ENCODE measurements at regions of chr1 and their contacts with region 1.

Region 1: DNA sequence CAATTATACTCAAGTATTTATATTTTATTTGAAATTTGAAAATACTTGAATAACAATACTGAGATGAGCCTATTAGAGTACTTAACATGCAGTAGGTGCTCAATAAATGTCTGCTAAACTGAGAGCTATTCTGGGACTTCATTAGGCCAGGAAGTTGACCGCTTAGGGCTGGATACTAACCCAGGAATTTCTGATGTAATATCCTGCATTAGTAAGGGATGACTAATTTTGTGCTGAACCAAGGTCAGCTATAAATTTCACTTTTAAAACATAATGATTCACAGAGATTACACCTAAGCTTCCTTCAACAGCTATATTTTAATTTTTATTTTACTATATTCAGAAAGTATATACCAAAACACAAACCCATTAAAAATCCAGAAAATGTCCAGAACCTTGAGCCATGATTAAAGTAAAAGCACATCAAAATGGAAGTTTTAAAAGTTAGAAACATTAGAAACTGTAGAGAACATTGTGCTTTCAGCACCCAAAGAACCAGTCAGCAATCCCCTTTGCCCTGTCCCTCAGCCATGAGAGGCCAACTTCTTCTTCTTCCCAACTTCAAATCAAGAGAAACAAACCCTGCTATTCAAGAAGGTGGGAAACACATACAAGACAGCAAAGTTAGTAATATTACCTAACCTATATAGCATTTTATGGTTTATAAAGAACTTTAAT is 35.4 kb downstream of the WNT2B start:
- DNase-seq: peak; percentile 95
- ATAC-seq: peak; percentile 82
- H3K4me3 ChIP-seq: no peak overlapping the region
- H3K27ac ChIP-seq: peak overlapping the region; percentile 81
- H3K4me1 ChIP-seq: peaks cover 5% of the 10 kb centered on the region; the same call in 1 of the 2 replicates
- H3K27me3 ChIP-seq: no peaks in the 10 kb centered on the region
- CTCF ChIP-seq: no peak
- POLR2A ChIP-seq: no peak
- RAD21 ChIP-seq: no peak

Region 2: GRCh38 chr1:112575154-112575804 is 31.1 kb after region 1 on chr1:
- CTCF ChIA-PET with region 1: no interaction called
- POLR2A ChIA-PET with region 1: no interaction called
- dilution Hi-C with region 1: no loop called
- in situ Hi-C with region 1: no loop called
- intact Hi-C with region 1: loop called (anchors 5 kb)
- DNase-seq: peak; percentile 98
- ATAC-seq: peak; percentile 98
- H3K4me3 ChIP-seq: no peak overlapping the region
- H3K27ac ChIP-seq: no peak overlapping the region
- H3K4me1 ChIP-seq: peaks cover 4% of the 10 kb centered on the region
- H3K27me3 ChIP-seq: no peaks in the 10 kb centered on the region
- CTCF ChIP-seq: no peak
- POLR2A ChIP-seq: no peak
- RAD21 ChIP-seq: no peak

Measured in IMR-90 (cell line).